ENCODE measurements at regions of chr3 and their contacts with region 1.

Region 1: GRCh38 chr3:141738022-141738890 is at the start of gene RNF7:
- DNase-seq: peak; percentile 93
- ATAC-seq: peak; percentile 96
- H3K4me3 ChIP-seq: peak within 1 kb of the TSS; percentile 86
- H3K27ac ChIP-seq: peak within 1 kb of the TSS; percentile 97
- H3K4me1 ChIP-seq: peaks cover 9% of the 10 kb centered on the region
- H3K27me3 ChIP-seq: no peaks in the 10 kb centered on the region
- CTCF ChIP-seq: peak; percentile 98
- POLR2A ChIP-seq: peak; percentile 68
- RAD21 ChIP-seq: peak; percentile 73
- total RNA-seq, gene RNF7: 111 and 149 TPM in 2 replicates

Region 2: GRCh38 chr3:141460097-141460704 is 278.1 kb before region 1 on chr3:
- CTCF ChIA-PET with region 1: no interaction called
- POLR2A ChIA-PET with region 1: no interaction called
- dilution Hi-C with region 1: no loop called
- in situ Hi-C with region 1: no loop called
- intact Hi-C with region 1: loop called (anchors 10 kb)
- DNase-seq: peak; percentile 85
- ATAC-seq: peak; percentile 91
- H3K4me3 ChIP-seq: no peak overlapping the region
- H3K27ac ChIP-seq: no peak overlapping the region
- H3K4me1 ChIP-seq: peaks cover 12% of the 10 kb centered on the region
- H3K27me3 ChIP-seq: no peaks in the 10 kb centered on the region
- CTCF ChIP-seq: peak; percentile 98
- POLR2A ChIP-seq: no peak
- RAD21 ChIP-seq: peak; percentile 97

Region 3: DNA sequence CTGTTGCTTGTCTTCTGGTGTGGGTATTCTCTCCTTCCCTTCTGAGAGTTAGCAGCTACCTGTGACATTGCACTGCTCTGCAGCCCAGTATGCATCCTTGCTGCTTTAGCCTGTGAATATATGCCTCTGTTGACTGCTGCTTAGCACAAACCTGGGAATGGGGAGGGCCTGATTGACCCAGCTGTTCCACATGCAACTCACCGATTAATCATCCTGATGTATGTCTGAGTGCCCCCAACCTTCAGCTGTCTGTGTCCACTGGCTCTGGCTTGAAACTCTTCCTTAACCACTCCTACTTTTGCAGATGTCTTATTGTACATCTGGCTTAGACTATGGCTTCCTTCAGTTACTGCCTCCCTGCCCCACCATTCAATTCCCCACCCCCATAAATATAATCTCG is 132.4 kb before region 1 on chr3:
- CTCF ChIA-PET with region 1: no interaction called
- POLR2A ChIA-PET with region 1: no interaction called
- dilution Hi-C with region 1: no loop called
- in situ Hi-C with region 1: no loop called
- intact Hi-C with region 1: loop called (anchors 10 kb)
- DNase-seq: peak; percentile 28
- ATAC-seq: no peak; the same call in 1 of the 2 replicates
- H3K4me3 ChIP-seq: no peak overlapping the region
- H3K27ac ChIP-seq: no peak overlapping the region
- H3K4me1 ChIP-seq: peaks cover 2% of the 10 kb centered on the region; the same call in 1 of the 2 replicates
- H3K27me3 ChIP-seq: no peaks in the 10 kb centered on the region
- CTCF ChIP-seq: no peak
- POLR2A ChIP-seq: no peak
- RAD21 ChIP-seq: no peak

Region 4: GRCh38 chr3:141659821-141660613 is 78.2 kb before region 1 on chr3:
- CTCF ChIA-PET with region 1: no interaction called
- POLR2A ChIA-PET with region 1: interaction called, 16 read pairs
- dilution Hi-C with region 1: no loop called
- in situ Hi-C with region 1: no loop called
- intact Hi-C with region 1: no loop called
- DNase-seq: peak; percentile 41
- ATAC-seq: peak; percentile 91
- H3K4me3 ChIP-seq: peak overlapping the region; percentile 63
- H3K27ac ChIP-seq: peak overlapping the region; percentile 30; the same call in 1 of the 2 replicates
- H3K4me1 ChIP-seq: peaks cover 5% of the 10 kb centered on the region; the same call in 1 of the 2 replicates
- H3K27me3 ChIP-seq: no peaks in the 10 kb centered on the region
- CTCF ChIP-seq: no peak
- POLR2A ChIP-seq: no peak
- RAD21 ChIP-seq: no peak

Region 5: DNA sequence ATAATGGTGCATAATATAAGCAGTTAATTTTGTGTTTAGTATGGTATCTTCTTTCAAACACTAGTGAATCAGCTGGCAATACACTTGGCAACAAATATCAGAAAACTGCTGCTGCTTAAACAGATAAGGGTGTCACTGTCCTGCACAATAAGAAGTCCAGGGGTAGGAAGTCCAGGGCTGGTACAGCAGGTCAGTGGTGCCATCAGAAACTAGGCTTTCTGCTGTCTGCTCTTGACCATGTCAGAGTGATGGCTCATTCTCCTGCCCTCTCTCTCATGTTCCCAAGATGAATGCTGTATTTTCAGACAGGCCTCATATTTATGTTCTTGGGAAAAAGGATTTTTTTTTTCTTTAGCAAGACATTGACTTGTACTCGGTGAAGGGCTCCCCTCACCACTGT is 15.8 kb after region 1 on chr3:
- CTCF ChIA-PET with region 1: no interaction called
- POLR2A ChIA-PET with region 1: no interaction called
- dilution Hi-C with region 1: no loop called
- in situ Hi-C with region 1: no loop called
- intact Hi-C with region 1: no loop called
- DNase-seq: no peak
- ATAC-seq: no peak
- H3K4me3 ChIP-seq: no peak overlapping the region
- H3K27ac ChIP-seq: no peak overlapping the region
- H3K4me1 ChIP-seq: no peaks in the 10 kb centered on the region
- H3K27me3 ChIP-seq: no peaks in the 10 kb centered on the region
- CTCF ChIP-seq: no peak
- POLR2A ChIP-seq: no peak
- RAD21 ChIP-seq: no peak

Region 6: DNA sequence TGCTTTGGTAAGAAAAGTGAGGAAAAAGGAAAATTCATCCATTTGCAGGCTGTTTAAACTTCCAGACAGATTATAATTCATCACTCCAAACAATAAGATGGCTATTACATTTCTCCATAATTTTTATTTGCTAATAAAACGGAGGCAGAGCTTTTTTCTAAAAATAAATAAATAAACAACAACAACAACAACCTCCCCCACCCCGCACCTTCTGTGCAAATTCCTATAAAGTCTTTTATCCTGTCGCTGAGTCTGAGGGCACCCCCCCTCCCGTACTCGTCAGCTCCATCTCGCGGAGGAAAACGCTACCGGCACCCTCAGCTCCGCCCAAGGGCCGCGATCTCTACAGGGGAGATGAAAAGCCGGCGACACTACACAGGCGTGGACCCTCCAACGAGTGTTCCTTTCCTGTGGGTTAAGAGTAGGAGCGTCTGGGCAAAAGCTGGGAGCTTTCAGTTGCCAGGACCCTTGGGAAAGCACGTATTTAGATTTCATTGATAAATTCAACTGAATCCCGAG is 137.2 kb after region 1 on chr3:
- CTCF ChIA-PET with region 1: interaction called, 6 read pairs
- POLR2A ChIA-PET with region 1: no interaction called
- dilution Hi-C with region 1: no loop called
- in situ Hi-C with region 1: no loop called
- intact Hi-C with region 1: loop called (anchors 1 kb)
- DNase-seq: peak; percentile 74
- ATAC-seq: peak; percentile 74
- H3K4me3 ChIP-seq: peak overlapping the region; percentile 96
- H3K27ac ChIP-seq: peak overlapping the region; percentile 87
- H3K4me1 ChIP-seq: peaks cover 2% of the 10 kb centered on the region
- H3K27me3 ChIP-seq: no peaks in the 10 kb centered on the region
- CTCF ChIP-seq: peak; percentile 88
- POLR2A ChIP-seq: no peak
- RAD21 ChIP-seq: peak; percentile 63

Region 7: DNA sequence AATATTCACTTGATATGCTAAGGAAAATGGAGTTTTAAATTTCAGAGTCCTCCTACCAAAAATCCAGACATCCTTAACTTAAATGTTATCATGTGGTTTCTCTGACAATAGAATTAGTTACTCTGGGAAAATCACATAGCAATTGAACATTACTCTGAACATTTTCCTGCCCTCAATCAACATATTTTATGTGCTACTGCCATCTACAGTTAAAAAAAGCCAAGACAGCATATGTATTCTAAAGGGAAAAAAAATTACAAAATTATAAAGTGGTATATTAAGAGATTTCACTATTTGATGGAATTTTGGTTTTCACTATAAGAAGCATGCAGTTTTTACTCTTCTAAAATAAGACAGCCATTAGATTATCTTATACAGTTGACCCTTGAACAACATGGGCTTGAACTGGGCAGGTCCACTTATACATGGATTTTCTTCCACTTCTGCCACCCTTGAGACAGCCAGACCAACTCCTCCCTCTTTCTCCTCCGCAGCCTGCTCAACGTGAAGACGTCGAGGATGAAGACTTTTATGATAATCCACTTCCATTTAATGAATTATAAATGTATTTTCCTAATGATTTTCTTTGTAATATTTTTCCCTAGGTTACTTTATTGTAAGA is 260.5 kb after region 1 on chr3:
- CTCF ChIA-PET with region 1: no interaction called
- POLR2A ChIA-PET with region 1: no interaction called
- dilution Hi-C with region 1: no loop called
- in situ Hi-C with region 1: no loop called
- intact Hi-C with region 1: loop called (anchors 1 kb)
- DNase-seq: peak; percentile 35
- ATAC-seq: 0 out of 2 replicates have a peak, but pooled peaks have one; percentile 49
- H3K4me3 ChIP-seq: no peak overlapping the region
- H3K27ac ChIP-seq: no peak overlapping the region
- H3K4me1 ChIP-seq: peaks cover 4% of the 10 kb centered on the region
- H3K27me3 ChIP-seq: no peaks in the 10 kb centered on the region
- CTCF ChIP-seq: peak; percentile 61
- POLR2A ChIP-seq: no peak
- RAD21 ChIP-seq: peak; percentile 52

Measured in IMR-90 (cell line).